AG04449 (cell line): ENCODE measurements at regions of chr11 and their contacts with region 1.

Region 1: GRCh38 chr11:10770626-10771254 is 19.7 kb downstream of the CTR9 start:
- DNase-seq: no peak
- H3K4me3 ChIP-seq: no peak overlapping the region
- CTCF ChIP-seq: peak; percentile 70

Region 2: DNA sequence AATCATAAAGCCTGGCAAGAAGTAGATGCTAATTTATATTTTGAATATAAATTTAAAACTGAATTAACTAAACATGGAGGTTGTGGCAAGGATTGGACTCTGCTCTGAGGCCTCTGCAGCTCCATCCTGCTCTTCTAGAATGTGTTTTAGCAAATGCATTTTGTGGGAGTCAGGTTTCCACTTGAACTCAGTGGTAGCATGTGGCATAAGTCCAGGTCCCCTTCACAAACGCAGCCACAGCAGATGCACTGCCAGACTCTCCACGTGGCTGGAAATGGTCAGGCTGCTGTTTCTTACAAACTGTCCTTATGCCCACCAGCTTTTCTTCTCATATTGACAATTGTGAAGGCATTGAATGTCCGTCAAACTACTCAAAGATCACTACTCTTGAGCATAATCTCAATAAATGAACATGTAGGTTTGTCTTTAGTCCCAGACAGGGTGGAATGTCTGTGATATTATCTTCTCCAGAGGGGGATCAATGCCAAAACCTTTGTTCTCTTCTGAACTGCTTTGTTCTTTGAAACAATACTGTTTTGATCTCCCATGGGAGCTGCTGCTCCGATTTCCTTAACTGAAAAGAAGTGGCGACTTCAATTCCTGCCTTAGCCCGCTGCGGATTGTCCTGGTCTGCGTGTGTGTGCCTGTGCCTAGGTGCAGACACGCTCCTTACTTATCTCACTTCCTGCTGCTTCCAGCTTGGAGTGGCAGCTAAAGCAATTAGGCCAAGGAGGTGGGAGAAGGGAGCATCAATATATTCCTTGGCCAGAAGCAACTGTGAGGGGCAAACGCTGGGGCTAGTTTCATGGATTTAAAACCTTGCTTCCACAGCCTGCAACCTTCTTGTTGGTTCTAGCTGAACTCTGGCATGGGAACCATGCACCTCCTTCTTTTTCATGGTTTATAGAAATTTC is 13.7 kb after region 1 on chr11:
- CTCF ChIA-PET with region 1: interaction called, 29 read pairs
- POLR2A ChIA-PET with region 1: no interaction called
- DNase-seq: no peak
- H3K4me3 ChIP-seq: no peak overlapping the region
- CTCF ChIP-seq: no peak

Region 3: GRCh38 chr11:10803676-10804075 is 32.9 kb after region 1 on chr11:
- CTCF ChIA-PET with region 1: interaction called, 19 read pairs
- POLR2A ChIA-PET with region 1: interaction called, 7 read pairs
- DNase-seq: no peak
- H3K4me3 ChIP-seq: no peak overlapping the region
- CTCF ChIP-seq: no peak

Region 4: DNA sequence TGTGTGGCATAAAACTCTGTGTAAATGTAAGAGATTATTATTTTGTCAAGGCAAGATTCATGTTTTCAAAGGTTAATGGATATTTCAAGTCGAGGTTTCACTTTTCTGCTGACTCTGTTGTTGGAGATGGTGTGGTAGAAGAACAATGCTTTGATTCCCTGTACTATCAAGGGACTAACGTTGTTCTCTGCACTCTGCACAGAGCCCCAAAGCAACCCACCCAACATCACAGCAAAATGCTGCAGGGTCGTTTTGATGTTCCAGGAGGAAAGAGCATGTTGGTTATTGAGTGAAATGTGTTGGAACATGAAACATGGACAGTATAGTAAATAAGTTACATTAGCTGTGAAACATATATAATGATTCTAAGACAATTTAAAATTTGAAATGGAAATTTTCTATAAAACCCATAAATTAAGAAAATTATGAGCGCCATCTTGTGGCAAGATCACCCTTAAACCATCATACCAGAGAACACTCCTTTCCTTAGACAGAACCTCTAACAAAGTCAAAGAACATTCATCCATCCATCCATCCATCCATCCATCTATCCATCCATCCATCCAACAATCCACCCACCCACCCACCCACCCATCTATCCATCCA is 251.5 kb after region 1 on chr11:
- CTCF ChIA-PET with region 1: interaction called, 27 read pairs
- POLR2A ChIA-PET with region 1: no interaction called
- DNase-seq: no peak
- H3K4me3 ChIP-seq: no peak overlapping the region
- CTCF ChIP-seq: no peak